ENCODE measurements at regions of chr12 and their contacts with region 1.

Region 1: GRCh38 chr12:46382964-46383653 is 10.5 kb upstream of the SLC38A2 start:
- DNase-seq: peak; percentile 98
- ATAC-seq: peak; percentile 92

Region 2: GRCh38 chr12:46459861-46460545 is 76.9 kb after region 1 on chr12:
- intact Hi-C with region 1: loop called (anchors 10 kb)
- DNase-seq: no peak
- ATAC-seq: peak; percentile 23

Region 3: GRCh38 chr12:46556105-46556559 is 173.0 kb after region 1 on chr12:
- intact Hi-C with region 1: loop called (anchors 10 kb)
- DNase-seq: no peak
- ATAC-seq: peak; percentile 96